Mammary epithelial cell (primary cell): ENCODE measurements at regions of chr22 and their contacts with region 1.

Region 1: GRCh38 chr22:40636380-40637182 is at the start of gene MRTFA:
- DNase-seq: peak; percentile 100
- H3K4me3 ChIP-seq: peak within 1 kb of the TSS; percentile 85 to 100 (median 90)
- H3K27ac ChIP-seq: peak within 1 kb of the TSS; percentile 80
- H3K4me1 ChIP-seq: peaks cover 20% of the 10 kb centered on the region
- H3K27me3 ChIP-seq: no peaks in the 10 kb centered on the region
- CTCF ChIP-seq: no peak
- total RNA-seq, gene MRTFA: 51.0 to 75.7 TPM

Region 2: DNA sequence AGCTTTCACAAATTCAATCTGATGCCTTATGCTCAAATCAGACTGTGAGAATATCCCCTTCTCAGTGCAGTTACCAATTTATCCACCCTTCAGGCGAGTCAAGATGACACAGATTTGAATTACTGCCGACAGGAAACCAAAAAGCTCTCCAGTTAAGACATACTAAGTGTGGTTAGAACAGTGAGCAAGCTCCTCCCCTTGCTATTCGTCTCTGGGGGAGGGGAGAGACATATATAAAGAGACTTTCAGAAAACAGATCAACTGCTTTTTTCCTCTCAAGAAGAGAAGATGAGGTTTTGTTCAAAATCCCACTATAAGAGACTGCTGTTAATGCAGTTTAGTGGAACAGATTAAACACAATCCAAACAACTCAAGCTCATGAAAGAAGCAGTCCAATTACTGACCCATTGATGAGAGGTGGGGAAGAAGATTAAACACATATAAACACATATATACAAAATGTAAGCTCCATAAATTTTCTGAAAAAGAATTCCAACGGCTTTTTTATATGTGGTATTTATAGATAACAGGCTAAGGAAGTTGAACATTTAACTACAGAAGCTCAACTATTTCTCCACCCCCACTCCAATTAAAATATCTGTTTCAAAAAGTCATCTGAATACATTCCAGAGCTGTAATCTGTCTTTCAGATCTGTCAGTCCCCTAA is 102.7 kb before region 1 on chr22:
- CTCF ChIA-PET with region 1: no interaction called
- dilution Hi-C with region 1: loop called (anchors 5 kb)
- in situ Hi-C with region 1: loop called in 1 of 2 experiments (anchors 5 kb)
- intact Hi-C with region 1: no loop called
- DNase-seq: peak; percentile 75
- H3K4me3 ChIP-seq: peak overlapping the region in 1 of 3 experiments; percentile 36
- H3K27ac ChIP-seq: peak overlapping the region; percentile 4
- H3K4me1 ChIP-seq: peaks cover 34% of the 10 kb centered on the region
- H3K27me3 ChIP-seq: no peaks in the 10 kb centered on the region
- CTCF ChIP-seq: no peak

Region 3: DNA sequence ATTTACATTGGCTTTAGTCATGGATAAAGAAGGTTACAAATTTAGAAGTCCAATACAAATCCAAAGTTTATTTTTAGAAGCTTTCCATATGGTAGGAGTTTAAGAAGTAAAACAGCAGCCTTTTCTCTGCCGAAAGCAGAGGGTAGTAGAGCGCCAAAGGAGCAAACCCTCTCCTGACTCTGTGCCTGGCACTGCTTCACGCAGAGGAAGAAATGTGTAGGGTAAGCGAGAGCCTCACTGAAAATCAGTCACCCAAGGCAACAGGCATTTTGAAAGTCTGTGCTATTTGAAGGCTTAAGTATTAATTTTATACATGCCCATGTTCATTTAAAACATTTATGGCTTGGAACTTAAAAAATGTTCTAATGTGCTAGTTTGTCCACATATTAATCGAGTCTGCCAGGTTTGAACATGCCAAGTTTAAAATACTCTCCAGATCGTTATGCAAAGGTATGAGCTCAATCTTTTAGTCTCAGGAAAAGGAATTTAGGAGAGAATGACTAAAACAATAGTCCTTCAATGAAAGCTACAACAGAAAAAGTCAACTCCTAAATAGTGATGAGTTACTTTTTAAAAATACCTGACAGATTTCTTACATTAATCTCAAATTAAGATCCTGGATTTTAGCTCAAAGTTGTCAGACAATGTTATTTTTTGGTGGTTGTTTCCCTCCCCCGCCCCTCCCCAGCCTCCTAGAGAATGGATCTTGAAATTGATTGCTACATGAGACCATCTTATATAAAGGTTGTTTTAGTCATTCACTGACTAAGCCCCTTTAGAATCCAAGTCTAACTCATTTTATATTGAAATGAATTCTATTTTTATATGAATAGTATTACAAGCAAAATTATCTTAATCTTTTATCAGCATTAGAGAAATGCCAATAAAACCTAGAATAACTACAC is 38.8 kb before region 1 on chr22:
- CTCF ChIA-PET with region 1: no interaction called
- dilution Hi-C with region 1: no loop called
- in situ Hi-C with region 1: no loop called
- intact Hi-C with region 1: loop called (anchors 2 kb)
- DNase-seq: peak; percentile 65
- H3K4me3 ChIP-seq: peak overlapping the region; percentile 25 to 38 (median 27)
- H3K27ac ChIP-seq: peak overlapping the region; percentile 76
- H3K4me1 ChIP-seq: peaks cover 46% of the 10 kb centered on the region
- H3K27me3 ChIP-seq: no peaks in the 10 kb centered on the region
- CTCF ChIP-seq: no peak